PC-3 (cell line): ENCODE measurements at regions of chr9 and their contacts with region 1.

Region 1: DNA sequence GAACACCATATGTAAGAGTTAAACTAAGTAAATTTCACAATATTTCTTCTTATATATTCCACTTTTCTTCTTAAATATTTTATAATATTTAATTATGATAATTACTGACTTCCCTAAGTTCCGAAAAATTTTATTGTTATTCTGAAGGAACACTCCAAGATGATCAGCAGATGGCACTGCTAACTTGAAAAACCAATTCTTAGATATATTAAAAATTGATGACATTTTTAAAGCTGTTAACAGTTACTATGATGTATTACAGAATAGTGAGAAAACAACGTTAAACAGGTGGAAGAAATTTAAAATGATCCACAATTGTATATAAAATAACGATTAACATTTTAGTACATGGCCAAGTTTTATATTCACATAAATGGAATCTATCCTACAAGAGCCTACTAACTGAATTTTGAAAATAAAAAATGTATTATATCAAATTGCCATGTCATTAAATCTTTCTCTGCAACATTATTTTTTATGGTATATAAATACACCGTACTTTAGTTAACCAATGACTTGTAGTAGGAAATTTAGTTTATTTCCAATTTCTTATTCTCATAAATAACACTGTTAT is 30.1 kb upstream of the MUSK start:
- DNase-seq: peak; percentile 64
- ATAC-seq: no peak
- H3K4me3 ChIP-seq: 0 out of 2 replicates have a peak overlapping the region, but pooled peaks have one; percentile 19
- H3K27ac ChIP-seq: peak overlapping the region; percentile 96
- H3K4me1 ChIP-seq: peaks cover 39% of the 10 kb centered on the region
- H3K27me3 ChIP-seq: no peaks in the 10 kb centered on the region
- CTCF ChIP-seq: peak; percentile 59

Region 2: DNA sequence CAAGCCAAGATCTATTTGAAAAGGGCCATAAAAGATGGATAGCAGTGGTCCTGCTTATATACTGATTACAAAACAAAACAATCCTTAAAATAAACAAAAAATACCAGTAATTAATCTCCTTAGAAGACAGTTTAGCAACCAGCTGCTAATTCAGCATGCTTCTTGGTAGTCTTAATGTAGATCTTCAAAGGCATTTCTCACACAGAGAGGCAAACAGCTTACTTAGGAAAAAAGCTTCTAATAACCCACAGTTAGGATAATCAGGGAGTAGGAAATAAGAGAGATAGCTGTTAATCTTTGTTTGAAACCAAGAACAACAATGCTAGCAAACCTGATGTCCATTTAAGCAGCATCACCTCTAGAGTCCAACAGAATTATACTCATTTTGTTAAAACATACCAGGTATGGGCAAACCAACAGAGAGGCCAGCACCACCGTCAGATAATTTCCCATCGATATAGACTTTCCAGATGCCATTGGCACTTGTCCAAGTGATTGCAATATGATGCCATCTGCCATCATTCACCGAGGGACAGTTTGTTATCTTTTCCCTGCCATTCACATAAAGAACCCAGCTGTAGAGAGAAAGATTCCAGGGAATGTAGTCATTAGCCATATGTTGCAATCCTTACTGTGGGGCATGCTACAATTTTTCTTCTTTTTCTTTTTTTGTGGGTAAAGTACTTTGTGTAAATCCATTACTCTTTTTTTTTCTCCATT is 195.2 kb before region 1 on chr9:
- CTCF ChIA-PET with region 1: no interaction called
- POLR2A ChIA-PET with region 1: no interaction called
- intact Hi-C with region 1: no loop called
- DNase-seq: peak; percentile 26
- ATAC-seq: no peak
- H3K4me3 ChIP-seq: no peak overlapping the region
- H3K27ac ChIP-seq: no peak overlapping the region
- H3K4me1 ChIP-seq: no peaks in the 10 kb centered on the region; the same call in 1 of the 2 replicates
- H3K27me3 ChIP-seq: no peaks in the 10 kb centered on the region
- CTCF ChIP-seq: no peak

Region 3: GRCh38 chr9:110502842-110503241 is 135.6 kb before region 1 on chr9:
- CTCF ChIA-PET with region 1: no interaction called
- POLR2A ChIA-PET with region 1: no interaction called
- intact Hi-C with region 1: no loop called
- DNase-seq: no peak
- ATAC-seq: no peak
- H3K4me3 ChIP-seq: no peak overlapping the region
- H3K27ac ChIP-seq: no peak overlapping the region
- H3K4me1 ChIP-seq: no peaks in the 10 kb centered on the region
- H3K27me3 ChIP-seq: no peaks in the 10 kb centered on the region
- CTCF ChIP-seq: no peak

Region 4: DNA sequence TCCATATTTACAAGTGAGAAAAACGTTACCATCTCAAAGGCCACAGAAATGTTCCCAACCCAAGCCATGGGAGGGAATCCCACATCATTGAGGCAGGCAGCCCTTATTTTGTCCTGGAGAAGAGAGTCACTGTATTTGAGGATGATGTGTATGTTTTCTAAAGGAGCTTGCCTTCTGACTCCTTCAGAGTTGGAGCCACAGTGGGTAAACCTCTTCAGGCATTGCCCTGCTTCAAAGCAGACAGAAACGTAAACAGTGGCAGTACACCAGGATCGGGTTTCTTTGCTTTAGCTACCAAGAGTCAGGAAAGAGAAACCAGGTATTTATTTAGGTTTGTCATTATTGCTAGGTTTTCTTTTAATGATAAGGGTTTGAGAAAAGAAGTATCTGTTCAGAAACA is 75.8 kb after region 1 on chr9:
- CTCF ChIA-PET with region 1: no interaction called
- POLR2A ChIA-PET with region 1: no interaction called
- intact Hi-C with region 1: loop called (anchors 2 kb)
- DNase-seq: peak; percentile 74
- ATAC-seq: peak; percentile 95
- H3K4me3 ChIP-seq: peak overlapping the region; percentile 64
- H3K27ac ChIP-seq: peak overlapping the region; percentile 98
- H3K4me1 ChIP-seq: peaks cover 24% of the 10 kb centered on the region
- H3K27me3 ChIP-seq: no peaks in the 10 kb centered on the region
- CTCF ChIP-seq: no peak

Region 5: DNA sequence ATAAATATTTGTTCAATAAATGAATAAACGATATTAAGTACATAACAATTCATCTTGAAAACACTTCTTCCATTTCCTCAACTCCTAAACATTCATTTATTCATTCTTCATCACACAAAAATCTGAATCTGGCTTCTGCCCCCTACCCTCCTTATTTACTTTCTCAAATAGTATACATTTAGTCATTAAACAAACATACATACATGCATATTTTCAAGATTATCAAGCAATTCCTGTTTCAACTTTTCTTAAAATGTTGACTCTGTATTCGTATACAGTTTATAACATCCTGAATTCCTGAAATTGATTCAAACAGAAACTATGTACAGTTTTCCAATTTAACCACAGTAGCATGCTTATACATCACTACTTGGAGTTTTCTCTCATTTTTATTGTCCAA is 159.1 kb after region 1 on chr9:
- CTCF ChIA-PET with region 1: no interaction called
- POLR2A ChIA-PET with region 1: no interaction called
- intact Hi-C with region 1: loop called (anchors 5 kb)
- DNase-seq: peak; percentile 91
- ATAC-seq: peak; percentile 67
- H3K4me3 ChIP-seq: no peak overlapping the region; the same call in 1 of the 2 replicates
- H3K27ac ChIP-seq: peak overlapping the region; percentile 99
- H3K4me1 ChIP-seq: peaks cover 43% of the 10 kb centered on the region
- H3K27me3 ChIP-seq: no peaks in the 10 kb centered on the region
- CTCF ChIP-seq: no peak

Region 6: GRCh38 chr9:110919609-110920008 is 281.1 kb after region 1 on chr9:
- CTCF ChIA-PET with region 1: no interaction called
- POLR2A ChIA-PET with region 1: no interaction called
- intact Hi-C with region 1: loop called (anchors 5 kb)
- DNase-seq: peak; percentile 87
- ATAC-seq: peak; percentile 62
- H3K4me3 ChIP-seq: no peak overlapping the region
- H3K27ac ChIP-seq: peak overlapping the region; percentile 97
- H3K4me1 ChIP-seq: peaks cover 87% of the 10 kb centered on the region
- H3K27me3 ChIP-seq: no peaks in the 10 kb centered on the region
- CTCF ChIP-seq: no peak

Region 7: DNA sequence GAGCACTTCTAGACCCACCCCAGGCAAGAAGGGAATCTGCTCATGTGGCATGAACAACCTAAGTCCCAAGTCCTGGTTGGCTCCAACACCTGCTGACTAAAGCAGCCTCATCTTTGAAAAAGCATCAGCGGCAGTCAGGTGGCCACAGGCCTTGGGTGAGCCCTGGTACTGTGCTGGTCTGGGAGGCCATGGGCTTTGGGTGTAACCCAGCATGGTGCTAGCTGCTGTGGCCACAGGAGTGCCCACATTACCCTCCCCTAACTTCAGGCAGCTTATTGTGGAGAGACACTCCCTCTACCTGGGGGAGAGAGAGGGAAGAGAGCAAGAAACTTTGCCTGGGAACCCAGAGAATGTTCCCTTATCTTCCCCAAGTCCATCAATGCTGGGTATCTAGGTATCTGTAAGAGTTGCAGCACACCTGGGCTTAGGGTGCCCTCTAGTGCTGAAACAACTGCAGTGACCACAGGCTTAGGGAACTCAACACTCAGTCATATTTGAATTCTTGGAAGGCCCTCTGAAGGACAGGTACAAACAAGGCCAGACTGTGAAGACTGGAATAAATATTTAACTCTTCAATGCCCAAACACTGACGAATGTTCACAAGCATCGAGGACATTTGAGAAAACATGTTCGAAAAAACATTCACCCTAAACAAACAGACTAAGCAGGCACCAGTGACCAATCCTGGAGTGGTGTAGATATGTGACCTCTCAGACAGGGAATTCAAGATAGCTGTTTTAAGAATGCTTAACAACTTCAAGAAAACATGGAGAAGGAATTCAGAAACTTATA is 761.5 kb after region 1 on chr9:
- CTCF ChIA-PET with region 1: no interaction called
- POLR2A ChIA-PET with region 1: no interaction called
- intact Hi-C with region 1: loop called (anchors 10 kb)
- DNase-seq: peak; percentile 69
- ATAC-seq: peak; percentile 85
- H3K4me3 ChIP-seq: no peak overlapping the region
- H3K27ac ChIP-seq: no peak overlapping the region
- H3K4me1 ChIP-seq: no peaks in the 10 kb centered on the region
- H3K27me3 ChIP-seq: no peaks in the 10 kb centered on the region
- CTCF ChIP-seq: peak; percentile 80